Breast epithelium (tissue), 4 donors: ENCODE measurements at regions of chr14 and their contacts with region 1.

Region 1: GRCh38 chr14:103500148-103500990 is 22.3 kb downstream of the CKB start:
- DNase-seq: peak; percentile 86 to 89
- H3K4me3 ChIP-seq: no peak overlapping the region
- H3K27ac ChIP-seq: peak overlapping the region; percentile 25 to 33
- H3K4me1 ChIP-seq: no peaks in the 10 kb centered on the region
- H3K27me3 ChIP-seq: no peaks in the 10 kb centered on the region
- CTCF ChIP-seq: peak; percentile 84 to 88 (median 86)
- POLR2A ChIP-seq: no peak

Region 2: DNA sequence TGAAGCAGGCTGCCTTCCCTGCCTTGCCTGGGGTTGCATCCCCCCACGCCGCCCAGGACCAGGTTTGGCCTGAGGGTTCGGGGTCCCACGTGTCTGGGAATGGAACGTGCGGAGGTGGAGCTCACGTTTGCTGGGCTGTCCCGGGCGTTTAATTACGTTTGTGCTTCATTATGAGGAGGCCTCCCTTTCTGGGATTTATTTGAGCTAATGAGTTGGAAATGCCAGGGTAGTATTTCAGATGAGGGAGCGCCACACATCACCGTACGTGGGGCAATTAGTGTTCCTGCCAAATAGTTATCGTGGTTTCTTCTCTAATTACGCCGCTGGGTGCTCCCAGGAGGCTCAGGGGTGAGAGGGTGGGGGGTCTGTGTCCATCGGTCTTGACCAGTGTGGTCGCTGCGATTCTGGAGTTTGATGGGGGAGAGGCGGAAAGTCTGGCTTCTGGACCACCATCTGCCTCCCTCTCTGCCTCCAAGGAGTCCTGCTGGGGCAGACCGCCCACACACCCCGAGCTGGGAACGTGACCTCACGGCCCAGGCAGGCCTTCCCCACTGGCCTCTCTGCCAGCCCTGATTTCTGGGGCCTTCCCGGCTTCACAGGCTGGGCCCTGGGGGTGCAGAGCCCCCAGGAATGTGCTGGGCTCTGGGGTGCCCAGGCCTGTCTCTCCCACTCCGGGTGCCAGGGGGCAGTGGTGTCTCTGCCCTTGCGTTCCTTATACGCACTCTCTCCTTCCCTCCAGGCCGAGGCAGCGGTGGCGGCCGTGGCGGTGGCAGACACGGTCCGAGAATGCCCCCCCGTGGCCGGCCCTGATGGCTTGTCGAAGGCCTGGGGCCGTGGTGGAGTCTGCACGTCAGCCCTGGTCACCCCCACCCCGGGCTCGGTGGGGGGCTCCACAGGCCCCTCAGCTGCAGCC is 656.9 kb after region 1 on chr14:
- intact Hi-C with region 1: loop called (anchors 5 kb)
- DNase-seq: no peak
- H3K4me3 ChIP-seq: no peak overlapping the region
- H3K27ac ChIP-seq: no peak overlapping the region
- H3K4me1 ChIP-seq: no peaks in the 10 kb centered on the region
- H3K27me3 ChIP-seq: no peaks in the 10 kb centered on the region
- CTCF ChIP-seq: no peak
- POLR2A ChIP-seq: no peak